T-cell (primary cell): ENCODE measurements at regions of chr6 and their contacts with region 1.

Region 1: DNA sequence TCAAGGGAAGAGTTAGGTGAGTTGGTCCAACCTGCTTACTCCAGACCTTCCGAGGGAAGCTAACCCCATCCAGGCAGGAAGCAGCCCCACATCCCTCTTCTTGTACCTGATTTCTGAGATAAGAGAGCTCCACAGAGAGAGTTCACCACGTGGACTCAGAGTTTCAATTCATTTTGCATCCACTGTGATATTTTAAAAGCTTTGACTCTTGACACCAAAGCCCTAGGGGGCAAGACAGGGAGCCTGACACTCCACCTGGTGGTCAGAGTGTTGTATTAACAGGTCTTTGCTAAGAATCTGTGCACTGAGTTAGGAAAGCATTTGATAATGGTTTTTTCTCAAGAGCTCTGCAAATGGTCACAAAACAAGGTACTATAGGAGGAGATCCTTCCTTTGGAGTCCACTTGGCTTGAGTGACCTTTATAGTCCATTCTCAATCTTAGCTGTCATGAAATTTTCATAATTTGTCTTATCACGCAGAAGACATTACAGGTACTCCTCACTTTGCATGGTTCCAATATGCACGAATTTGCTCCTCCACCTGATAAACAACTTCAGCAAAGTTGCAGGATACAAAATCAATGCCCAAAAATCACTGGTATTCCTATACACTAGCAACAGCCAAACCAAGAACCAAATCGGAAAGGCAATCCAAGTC is 56.2 kb upstream of the RIPOR2 start:
- DNase-seq: peak; percentile 46 to 89 (median 75)
- ATAC-seq: peak; percentile 87 to 93 (median 91)
- H3K4me3 ChIP-seq: no peak overlapping the region
- H3K4me3 Mint-ChIP-seq: peak overlapping the region; percentile 17 to 63 (median 47)
- H3K27ac ChIP-seq: peak overlapping the region; percentile 48
- H3K27ac Mint-ChIP-seq: peak overlapping the region; percentile 94
- H3K4me1 ChIP-seq: peaks cover 26 to 29% of the 10 kb centered on the region in 2 experiments
- H3K4me1 Mint-ChIP-seq: peaks cover 78 to 80% (median 78%) of the 10 kb centered on the region in 3 donors
- H3K27me3 ChIP-seq: no peaks in the 10 kb centered on the region
- H3K27me3 Mint-ChIP-seq: no peaks in the 10 kb centered on the region

Region 2: GRCh38 chr6:24779408-24780016 is 212.4 kb before region 1 on chr6:
- CTCF ChIA-PET with region 1: no interaction called
- POLR2A ChIA-PET with region 1: no interaction called
- DNase-seq: no peak
- ATAC-seq: no peak
- H3K4me3 ChIP-seq: no peak overlapping the region
- H3K4me3 Mint-ChIP-seq: no peak overlapping the region
- H3K27ac ChIP-seq: no peak overlapping the region
- H3K27ac Mint-ChIP-seq: no peak overlapping the region
- H3K4me1 ChIP-seq: peaks cover 9 to 10% of the 10 kb centered on the region in 2 experiments
- H3K4me1 Mint-ChIP-seq: peaks cover 26 to 32% (median 26%) of the 10 kb centered on the region in 3 donors
- H3K27me3 ChIP-seq: no peaks in the 10 kb centered on the region
- H3K27me3 Mint-ChIP-seq: no peaks in the 10 kb centered on the region

Region 3: GRCh38 chr6:24883618-24884017 is 108.3 kb before region 1 on chr6:
- CTCF ChIA-PET with region 1: interaction called, 5 to 22 read pairs
- POLR2A ChIA-PET with region 1: no interaction called
- DNase-seq: no peak
- ATAC-seq: peak in 2 of 4 experiments; percentile 48 to 52
- H3K4me3 ChIP-seq: no peak overlapping the region
- H3K4me3 Mint-ChIP-seq: peak overlapping the region in 2 of 3 donors; percentile 38 to 46
- H3K27ac ChIP-seq: peak overlapping the region; percentile 33
- H3K27ac Mint-ChIP-seq: peak overlapping the region; percentile 77 to 93
- H3K4me1 ChIP-seq: peaks cover 46 to 60% of the 10 kb centered on the region in 2 experiments
- H3K4me1 Mint-ChIP-seq: peaks cover 87 to 98% (median 88%) of the 10 kb centered on the region in 3 donors
- H3K27me3 ChIP-seq: no peaks in the 10 kb centered on the region
- H3K27me3 Mint-ChIP-seq: no peaks in the 10 kb centered on the region

Region 4: GRCh38 chr6:24919004-24919892 is 72.7 kb before region 1 on chr6:
- CTCF ChIA-PET with region 1: interaction called, 10 to 13 read pairs
- POLR2A ChIA-PET with region 1: interaction called, 3 to 7 read pairs
- DNase-seq: peak in 1 of 35 experiments; percentile 5
- ATAC-seq: peak; percentile 29 to 59 (median 34)
- H3K4me3 ChIP-seq: peak overlapping the region; percentile 19 to 20
- H3K4me3 Mint-ChIP-seq: peak overlapping the region; percentile 75 to 93 (median 75)
- H3K27ac ChIP-seq: peak overlapping the region; percentile 55
- H3K27ac Mint-ChIP-seq: peak overlapping the region; percentile 84 to 90
- H3K4me1 ChIP-seq: peaks cover 69 to 85% of the 10 kb centered on the region in 2 experiments
- H3K4me1 Mint-ChIP-seq: peaks cover 95 to 96% (median 96%) of the 10 kb centered on the region in 3 donors
- H3K27me3 ChIP-seq: no peaks in the 10 kb centered on the region
- H3K27me3 Mint-ChIP-seq: no peaks in the 10 kb centered on the region

Region 5: GRCh38 chr6:24949020-24949569 is 42.8 kb before region 1 on chr6:
- CTCF ChIA-PET with region 1: interaction called in 1 of 2 experiments, 23 read pairs
- POLR2A ChIA-PET with region 1: interaction called in 1 of 2 experiments, 3 read pairs
- DNase-seq: peak in 34 of 35 experiments; percentile 39 to 82 (median 60)
- ATAC-seq: peak; percentile 69 to 81 (median 78)
- H3K4me3 ChIP-seq: peak overlapping the region; percentile 24 to 60
- H3K4me3 Mint-ChIP-seq: peak overlapping the region; percentile 55 to 76 (median 60)
- H3K27ac ChIP-seq: peak overlapping the region; percentile 76
- H3K27ac Mint-ChIP-seq: peak overlapping the region; percentile 96 to 98
- H3K4me1 ChIP-seq: peaks cover 63 to 68% of the 10 kb centered on the region in 2 experiments
- H3K4me1 Mint-ChIP-seq: peaks cover 75 to 82% (median 78%) of the 10 kb centered on the region in 3 donors
- H3K27me3 ChIP-seq: no peaks in the 10 kb centered on the region
- H3K27me3 Mint-ChIP-seq: no peaks in the 10 kb centered on the region

Region 6: DNA sequence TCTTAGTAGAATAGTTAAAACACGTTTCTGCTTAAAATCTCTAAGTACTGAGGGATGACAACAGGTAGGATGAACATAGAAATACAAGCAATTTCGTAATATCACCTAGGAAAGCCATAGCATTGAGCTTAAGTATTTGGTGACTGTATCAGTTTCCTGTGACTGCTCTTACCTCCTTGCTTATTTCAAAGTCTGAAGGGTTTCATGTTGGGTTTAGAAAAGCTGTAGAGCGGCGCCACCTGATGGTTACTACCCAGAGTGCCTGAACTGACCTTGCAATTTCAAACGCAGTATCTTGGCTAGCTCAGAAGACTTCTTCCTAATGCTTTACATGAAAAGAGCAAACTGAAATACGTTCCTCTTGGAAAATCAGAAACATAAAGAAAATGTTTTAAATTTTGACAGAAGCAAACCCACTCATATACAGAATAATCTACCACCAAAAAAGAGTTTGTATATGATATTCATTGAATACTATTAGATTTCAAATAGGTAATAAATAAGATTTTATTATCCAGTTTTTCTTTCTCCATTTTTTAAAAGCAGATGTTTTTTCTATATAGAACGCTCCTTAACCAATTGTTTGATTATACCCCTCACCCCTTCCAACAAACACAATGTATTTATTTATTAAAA is 26.1 kb after region 1 on chr6:
- CTCF ChIA-PET with region 1: interaction called, 17 to 57 read pairs
- POLR2A ChIA-PET with region 1: interaction called in 1 of 2 experiments, 3 read pairs
- DNase-seq: peak; percentile 55 to 92 (median 80)
- ATAC-seq: peak; percentile 76 to 95 (median 91)
- H3K4me3 ChIP-seq: no peak overlapping the region
- H3K4me3 Mint-ChIP-seq: peak overlapping the region in 2 of 3 donors; percentile 34 to 63
- H3K27ac ChIP-seq: peak overlapping the region; percentile 33
- H3K27ac Mint-ChIP-seq: peak overlapping the region; percentile 87 to 91
- H3K4me1 ChIP-seq: peaks cover 17 to 24% of the 10 kb centered on the region in 2 experiments
- H3K4me1 Mint-ChIP-seq: peaks cover 39 to 48% (median 44%) of the 10 kb centered on the region in 3 donors
- H3K27me3 ChIP-seq: no peaks in the 10 kb centered on the region
- H3K27me3 Mint-ChIP-seq: no peaks in the 10 kb centered on the region

Region 7: DNA sequence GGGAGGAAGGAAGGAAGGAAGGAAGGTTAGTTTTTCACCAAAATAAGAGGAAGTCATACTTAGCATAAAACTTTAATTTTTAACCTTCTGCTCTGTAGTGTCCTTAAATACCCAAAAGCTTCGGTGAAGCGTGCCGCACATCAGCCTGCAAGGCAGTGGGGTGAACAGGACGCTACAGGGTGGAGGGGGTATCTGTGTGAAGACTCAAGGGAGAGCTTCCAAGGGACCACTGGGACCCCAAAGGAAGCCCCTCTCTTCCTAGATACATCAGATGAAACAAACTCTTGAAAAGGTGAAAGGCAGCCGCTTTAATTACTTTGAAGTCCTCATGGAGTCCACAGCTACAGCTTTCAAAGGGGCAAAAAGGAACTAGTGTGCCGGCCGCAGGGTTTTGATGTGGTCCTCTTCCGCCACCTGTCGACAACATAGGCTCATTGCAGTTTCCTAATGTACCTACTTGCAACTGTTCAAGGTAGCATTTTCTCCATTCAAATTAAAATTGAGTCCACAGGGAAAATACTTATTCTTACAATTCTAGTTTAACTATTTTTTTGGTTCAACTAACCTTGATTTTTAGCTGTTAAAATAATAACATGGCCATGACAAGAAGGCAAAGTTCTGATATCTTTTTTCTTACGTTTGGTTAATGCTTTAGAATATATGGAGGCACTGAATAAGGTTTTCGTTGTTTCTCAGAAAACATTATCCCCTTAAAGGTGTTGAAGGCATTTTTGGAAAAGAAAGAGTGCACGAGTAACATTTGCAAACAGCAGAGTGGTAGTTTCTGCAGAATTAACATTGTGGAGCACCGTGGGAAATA is 78.8 kb after region 1 on chr6:
- CTCF ChIA-PET with region 1: interaction called, 4 to 25 read pairs
- POLR2A ChIA-PET with region 1: interaction called in 1 of 2 experiments, 3 read pairs
- DNase-seq: peak; percentile 62 to 93 (median 76)
- ATAC-seq: peak; percentile 91 to 94 (median 94)
- H3K4me3 ChIP-seq: no peak overlapping the region
- H3K4me3 Mint-ChIP-seq: peak overlapping the region; percentile 28 to 59 (median 56)
- H3K27ac ChIP-seq: peak overlapping the region; percentile 61
- H3K27ac Mint-ChIP-seq: peak overlapping the region; percentile 87 to 89
- H3K4me1 ChIP-seq: peaks cover 0 to 5% of the 10 kb centered on the region in 2 experiments
- H3K4me1 Mint-ChIP-seq: peaks cover 4 to 9% (median 5%) of the 10 kb centered on the region in 3 donors
- H3K27me3 ChIP-seq: no peaks in the 10 kb centered on the region
- H3K27me3 Mint-ChIP-seq: no peaks in the 10 kb centered on the region